Sciatic nerve (tissue), 2 donors: ENCODE measurements at regions of chr17 and their contacts with region 1.

Region 1: DNA sequence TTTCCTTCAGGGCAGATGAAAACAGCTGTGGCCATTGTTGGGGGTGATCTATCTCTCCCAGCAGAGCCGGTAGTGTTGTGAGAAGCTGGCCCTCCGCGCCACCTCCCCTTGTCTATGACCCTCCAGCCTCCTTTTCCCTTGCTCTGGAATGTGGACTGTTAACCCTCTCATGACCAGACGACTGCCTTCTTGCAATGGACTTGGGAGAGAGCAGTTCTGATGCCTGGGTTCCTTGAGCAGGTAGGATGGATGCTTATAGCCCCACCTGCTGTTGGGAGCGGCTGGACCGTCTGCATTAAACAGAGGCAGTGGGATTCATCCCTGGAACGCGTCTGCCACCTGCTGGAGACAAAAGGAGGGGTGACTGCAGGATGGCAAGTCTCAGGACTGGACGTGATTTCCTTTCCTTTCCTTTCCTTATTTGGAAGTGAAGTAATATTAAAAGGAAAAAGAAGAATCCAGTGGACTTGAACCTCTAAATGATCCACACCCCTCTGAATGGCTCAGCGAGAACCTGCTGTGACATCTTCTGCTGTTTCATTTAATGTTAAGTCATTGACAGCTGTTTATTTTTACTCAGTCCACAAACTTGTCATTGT is 1.8 kb upstream of the SOST start:
- DNase-seq: peak; percentile 97
- ATAC-seq: peak; percentile 92

Region 2: GRCh38 chr17:43694077-43694870 is 66.1 kb before region 1 on chr17:
- intact Hi-C with region 1: loop called (anchors 1 kb)
- DNase-seq: peak; percentile 82
- ATAC-seq: peak; percentile 87